CD8-positive, alpha-beta memory T cell (primary cell): ENCODE measurements at regions of chr7 and their contacts with region 1.

Region 1: DNA sequence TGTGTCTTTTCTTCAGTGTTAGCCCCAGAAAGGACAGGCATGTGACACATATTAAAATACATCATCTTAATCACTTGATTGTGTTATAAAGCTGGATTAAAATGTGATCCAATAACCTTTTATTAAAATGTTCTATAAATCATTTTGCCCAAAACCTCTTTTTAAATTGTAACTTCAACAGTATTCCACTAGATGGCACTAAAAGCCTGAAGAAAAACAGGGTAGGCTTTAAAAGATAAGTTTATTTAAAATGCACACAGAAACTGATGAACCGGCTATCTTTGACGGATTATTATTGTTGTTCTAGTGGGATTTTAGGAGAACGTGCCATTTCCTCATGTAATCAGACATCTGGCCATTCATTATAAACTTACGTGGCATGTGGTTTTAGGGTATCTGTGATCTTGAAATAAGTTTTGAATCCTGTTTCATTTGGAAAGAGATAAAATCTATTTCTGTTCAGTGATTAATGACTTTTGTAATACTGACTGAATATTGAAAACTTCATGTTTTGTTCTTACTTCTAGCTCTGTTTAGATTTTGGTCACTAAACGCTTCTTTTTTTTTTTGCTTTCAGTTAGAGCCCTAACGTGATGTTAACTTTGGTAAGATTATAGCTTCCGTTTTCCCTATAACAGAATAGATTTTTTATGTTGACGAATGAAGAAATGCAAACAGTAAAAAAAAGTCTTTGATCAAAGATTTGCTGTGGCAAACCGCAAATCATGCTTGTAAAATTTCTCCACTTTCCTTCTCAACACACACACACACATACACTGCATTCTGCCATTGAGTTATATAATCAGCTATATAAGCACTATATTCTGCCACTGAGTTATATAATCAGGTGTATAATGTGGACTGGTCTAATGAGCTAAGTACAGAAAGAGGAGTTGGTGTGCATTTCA is 13.6 kb downstream of the VPS50 start:
- DNase-seq: peak in 2 of 5 donors; percentile 7 to 30
- H3K4me3 ChIP-seq: no peak overlapping the region
- H3K4me3 Mint-ChIP-seq: peak overlapping the region; percentile 25 to 81 (median 63)
- H3K27ac ChIP-seq: no peak overlapping the region
- H3K27ac Mint-ChIP-seq: peak overlapping the region in 5 of 8 donors; percentile 30 to 68 (median 45)
- H3K4me1 ChIP-seq: no peaks in the 10 kb centered on the region
- H3K4me1 Mint-ChIP-seq: peaks cover 9 to 38% (median 22%) of the 10 kb centered on the region in 3 donors
- H3K27me3 ChIP-seq: no peaks in the 10 kb centered on the region
- H3K27me3 Mint-ChIP-seq: no peaks in the 10 kb centered on the region

Region 2: GRCh38 chr7:93231799-93232672 is 13.7 kb before region 1 on chr7 and contains the start of gene VPS50:
- CTCF ChIA-PET with region 1: interaction called, 13 read pairs
- POLR2A ChIA-PET with region 1: no interaction called
- DNase-seq: peak; percentile 85 to 96 (median 94)
- H3K4me3 ChIP-seq: peak within 1 kb of the TSS; percentile 92
- H3K4me3 Mint-ChIP-seq: peak within 1 kb of the TSS; percentile 87 to 97 (median 94)
- H3K27ac ChIP-seq: peak within 1 kb of the TSS; percentile 79
- H3K27ac Mint-ChIP-seq: peak within 1 kb of the TSS; percentile 78 to 99 (median 96)
- H3K4me1 ChIP-seq: peaks cover 20% of the 10 kb centered on the region
- H3K4me1 Mint-ChIP-seq: peaks cover 16 to 29% (median 28%) of the 10 kb centered on the region in 3 donors
- H3K27me3 ChIP-seq: no peaks in the 10 kb centered on the region
- H3K27me3 Mint-ChIP-seq: no peaks in the 10 kb centered on the region
- total RNA-seq, gene VPS50: 22.8 to 28.2 TPM

Region 3: DNA sequence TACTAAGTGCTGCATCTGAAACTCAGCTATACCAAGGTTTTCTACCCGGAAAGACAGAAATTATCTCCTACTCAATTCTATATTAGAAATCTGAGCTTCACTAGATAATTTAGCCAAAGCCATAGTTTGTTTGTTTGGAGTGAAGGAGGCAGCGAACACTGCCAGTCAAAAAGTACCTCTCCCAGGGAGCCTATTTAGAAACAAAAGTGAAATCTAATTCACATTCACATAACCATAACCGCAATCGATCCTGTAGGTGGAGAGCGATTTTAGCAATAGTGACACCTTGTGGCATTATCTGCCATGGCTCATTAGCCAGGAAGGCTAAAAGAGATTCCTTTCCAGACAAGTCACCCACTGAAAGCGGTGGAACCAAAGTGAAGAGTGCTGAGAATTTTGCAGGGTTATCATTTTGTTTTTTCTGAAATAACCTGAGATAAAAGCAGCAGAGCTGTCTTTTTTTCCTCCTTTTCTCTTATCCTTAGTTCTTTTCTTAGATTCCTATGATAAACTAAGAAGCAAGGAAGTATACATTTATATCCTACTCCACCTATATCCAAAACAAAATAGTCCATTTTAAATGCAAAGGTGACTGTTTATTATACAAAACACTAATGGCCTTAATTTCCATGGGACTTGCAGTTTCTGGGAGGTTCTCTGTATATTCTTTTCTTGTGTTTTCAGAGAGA is 842.0 kb after region 1 on chr7:
- CTCF ChIA-PET with region 1: interaction called, 18 read pairs
- POLR2A ChIA-PET with region 1: no interaction called
- DNase-seq: peak in 4 of 5 donors; percentile 14 to 55 (median 48)
- H3K4me3 ChIP-seq: peak overlapping the region; percentile 38
- H3K4me3 Mint-ChIP-seq: peak overlapping the region; percentile 55 to 83 (median 75)
- H3K27ac ChIP-seq: no peak overlapping the region
- H3K27ac Mint-ChIP-seq: peak overlapping the region in 5 of 8 donors; percentile 18 to 83 (median 81)
- H3K4me1 ChIP-seq: no peaks in the 10 kb centered on the region
- H3K4me1 Mint-ChIP-seq: peaks cover 4 to 7% (median 6%) of the 10 kb centered on the region in 3 donors
- H3K27me3 ChIP-seq: no peaks in the 10 kb centered on the region
- H3K27me3 Mint-ChIP-seq: peaks cover 10 to 28% of the 10 kb centered on the region in 2 donors